Activated CD8-positive, alpha-beta T cell treated with anti-CD3 and anti-CD28 coated beads, Interleukin-2, amount 10 ng/mL, durations not matched to agents 7 days and 5 days (primary cell): ENCODE measurements at regions of chr2 and their contacts with region 1.

Region 1: GRCh38 chr2:86118133-86118532 is 12.1 kb downstream of the PTCD3 start:
- DNase-seq: no peak
- ATAC-seq: no peak
- H3K4me3 Mint-ChIP-seq: no peak overlapping the region
- H3K27ac Mint-ChIP-seq: no peak overlapping the region
- H3K4me1 Mint-ChIP-seq: no peaks in the 10 kb centered on the region
- H3K27me3 Mint-ChIP-seq: no peaks in the 10 kb centered on the region

Region 2: GRCh38 chr2:86087936-86088850 is 29.9 kb before region 1 on chr2:
- CTCF ChIA-PET with region 1: no interaction called
- POLR2A ChIA-PET with region 1: no interaction called
- DNase-seq: no peak
- ATAC-seq: no peak
- H3K4me3 Mint-ChIP-seq: no peak overlapping the region
- H3K27ac Mint-ChIP-seq: no peak overlapping the region
- H3K4me1 Mint-ChIP-seq: no peaks in the 10 kb centered on the region
- H3K27me3 Mint-ChIP-seq: no peaks in the 10 kb centered on the region

Region 3: DNA sequence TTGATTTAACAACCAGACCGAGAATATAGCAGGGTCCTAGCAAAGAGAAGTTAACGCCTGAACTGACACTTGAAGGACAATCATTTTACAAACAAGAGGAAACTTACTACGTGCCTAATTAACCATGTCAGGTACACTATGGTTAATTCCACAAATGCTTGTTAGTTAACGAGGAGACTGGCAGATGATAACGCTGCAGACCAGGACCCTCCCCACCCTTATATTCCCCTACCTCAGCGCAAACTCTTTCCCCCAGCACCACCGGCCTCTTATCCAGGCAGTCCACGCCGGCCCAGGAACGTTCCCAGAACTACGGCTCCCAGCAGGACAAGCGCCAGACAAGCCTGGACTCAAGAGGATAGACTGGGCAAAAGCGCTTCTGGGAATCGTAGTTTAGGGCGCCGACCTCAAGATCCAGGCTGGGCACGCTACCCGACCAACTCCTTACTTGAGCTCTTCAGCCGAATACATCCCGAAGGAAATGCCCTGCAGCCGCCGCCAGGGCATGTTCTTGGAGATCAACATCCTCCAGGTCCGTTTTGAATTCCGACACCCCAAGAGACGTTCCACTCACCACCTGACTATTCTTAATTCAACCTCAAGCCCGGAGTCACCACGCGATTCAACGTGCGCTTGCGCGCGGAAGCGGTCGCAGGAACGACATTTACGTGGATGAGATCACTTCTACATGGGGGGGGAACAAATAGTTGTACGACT is 12.7 kb before region 1 on chr2 and contains the start of gene POLR1A:
- CTCF ChIA-PET with region 1: no interaction called
- POLR2A ChIA-PET with region 1: interaction called, 11 read pairs
- DNase-seq: peak; percentile 91
- ATAC-seq: peak; percentile 85
- H3K4me3 Mint-ChIP-seq: peak within 1 kb of the TSS; percentile 92
- H3K27ac Mint-ChIP-seq: peak within 1 kb of the TSS; percentile 99
- H3K4me1 Mint-ChIP-seq: peaks cover 46% of the 10 kb centered on the region
- H3K27me3 Mint-ChIP-seq: no peaks in the 10 kb centered on the region
- total RNA-seq, gene POLR1A: 40.8 to 41.5 TPM